ENCODE measurements at regions of chr19 and their contacts with region 1.

Region 1: GRCh38 chr19:43675269-43675879 is 5.4 kb upstream of the PLAUR start:
- DNase-seq: peak; percentile 18
- ATAC-seq: peak; percentile 80
- H3K4me3 ChIP-seq: peak overlapping the region in 1 of 2 experiments; percentile 14; a peak in 2 of 4 replicates
- H3K27ac ChIP-seq: no peak overlapping the region
- H3K4me1 ChIP-seq: peaks cover 9% of the 10 kb centered on the region
- H3K27me3 ChIP-seq: no peaks in the 10 kb centered on the region
- CTCF ChIP-seq: no peak

Region 2: GRCh38 chr19:43705729-43706128 is 30.4 kb after region 1 on chr19:
- CTCF ChIA-PET with region 1: interaction called, 13 read pairs
- POLR2A ChIA-PET with region 1: no interaction called
- in situ Hi-C with region 1: no loop called
- intact Hi-C with region 1: no loop called
- DNase-seq: no peak
- ATAC-seq: no peak
- H3K4me3 ChIP-seq: no peak overlapping the region
- H3K27ac ChIP-seq: no peak overlapping the region
- H3K4me1 ChIP-seq: no peaks in the 10 kb centered on the region; the same call in 1 of the 2 replicates
- H3K27me3 ChIP-seq: no peaks in the 10 kb centered on the region
- CTCF ChIP-seq: no peak

Region 3: GRCh38 chr19:43774103-43774939 is 98.9 kb after region 1 on chr19:
- CTCF ChIA-PET with region 1: no interaction called
- POLR2A ChIA-PET with region 1: no interaction called
- in situ Hi-C with region 1: no loop called
- intact Hi-C with region 1: no loop called
- DNase-seq: no peak
- ATAC-seq: no peak
- H3K4me3 ChIP-seq: no peak overlapping the region
- H3K27ac ChIP-seq: no peak overlapping the region
- H3K4me1 ChIP-seq: peaks cover 18% of the 10 kb centered on the region
- H3K27me3 ChIP-seq: no peaks in the 10 kb centered on the region
- CTCF ChIP-seq: no peak

Measured in Panc1 (cell line).